ENCODE measurements at regions of chr17 and their contacts with region 1.

Region 1: GRCh38 chr17:74457146-74457819 is 9.2 kb upstream of the CD300A start:
- DNase-seq: peak; percentile 83 to 93
- ATAC-seq: peak; percentile 70
- H3K4me3 ChIP-seq: no peak overlapping the region
- H3K27ac ChIP-seq: no peak overlapping the region
- H3K4me1 ChIP-seq: no peaks in the 10 kb centered on the region
- H3K27me3 ChIP-seq: no peaks in the 10 kb centered on the region

Region 2: DNA sequence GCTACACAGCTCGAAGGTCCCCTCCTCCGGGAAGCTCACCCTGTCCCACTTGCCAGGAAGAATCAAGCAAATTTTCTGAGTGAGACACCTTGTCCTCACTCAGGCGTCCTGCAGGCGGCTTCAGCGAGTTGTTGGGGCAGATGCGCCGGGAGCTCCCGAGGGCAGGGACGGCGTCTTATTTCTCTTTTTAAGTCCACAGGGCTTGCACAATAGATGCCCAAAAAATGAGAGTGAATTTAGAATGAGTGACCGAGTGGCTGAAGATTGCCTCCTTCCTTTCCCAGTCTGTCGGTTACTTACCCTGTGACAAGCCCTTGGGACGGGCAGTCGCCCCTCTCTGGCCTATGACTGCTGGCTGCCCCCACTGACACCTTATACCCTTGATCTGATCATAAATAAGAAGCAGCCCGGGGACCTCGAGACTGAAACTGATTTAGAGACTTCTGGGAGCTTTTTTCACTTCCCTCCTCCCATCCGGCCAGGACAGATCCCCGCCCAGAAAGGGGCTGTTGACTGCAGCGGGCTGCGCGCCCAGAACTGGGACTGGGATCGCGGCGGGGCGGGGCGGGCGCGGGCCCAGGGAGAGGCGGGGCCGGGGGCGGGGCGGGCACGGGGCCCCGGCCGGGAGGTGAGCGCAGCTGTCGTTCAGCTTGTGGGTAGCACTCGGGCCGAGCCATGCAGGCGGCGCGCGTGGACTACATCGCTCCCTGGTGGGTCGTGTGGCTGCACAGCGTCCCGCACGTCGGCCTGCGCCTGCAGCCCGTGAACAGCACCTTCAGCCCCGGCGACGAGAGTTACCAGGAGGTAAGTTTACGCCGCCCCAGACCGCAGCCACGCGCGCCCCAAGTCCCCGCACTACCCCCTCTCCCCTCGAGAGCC is 244.1 kb before region 1 on chr17 and contains the start of gene TTYH2:
- intact Hi-C with region 1: loop called in 1 of 2 experiments (anchors 5 kb)
- DNase-seq: peak; percentile 94 to 95
- ATAC-seq: peak; percentile 91
- H3K4me3 ChIP-seq: peak within 1 kb of the TSS; percentile 28 to 55
- H3K27ac ChIP-seq: no peak within 1 kb of the TSS
- H3K4me1 ChIP-seq: no peaks in the 10 kb centered on the region
- H3K27me3 ChIP-seq: no peaks in the 10 kb centered on the region
- total RNA-seq, gene TTYH2: 4.4 to 13.0 TPM

Region 3: GRCh38 chr17:74307984-74308773 is 149.1 kb before region 1 on chr17:
- intact Hi-C with region 1: no loop called
- DNase-seq: no peak
- ATAC-seq: no peak
- H3K4me3 ChIP-seq: no peak overlapping the region
- H3K27ac ChIP-seq: no peak overlapping the region
- H3K4me1 ChIP-seq: no peaks in the 10 kb centered on the region
- H3K27me3 ChIP-seq: peaks cover 0 to 1% of the 10 kb centered on the region in 2 donors

Region 4: GRCh38 chr17:74379495-74380085 is 77.7 kb before region 1 on chr17:
- intact Hi-C with region 1: loop called (anchors 1 kb)
- DNase-seq: peak; percentile 95 to 99
- ATAC-seq: peak; percentile 94
- H3K4me3 ChIP-seq: no peak overlapping the region
- H3K27ac ChIP-seq: peak overlapping the region in 1 of 2 donors; percentile 12
- H3K4me1 ChIP-seq: no peaks in the 10 kb centered on the region
- H3K27me3 ChIP-seq: no peaks in the 10 kb centered on the region

Region 5: DNA sequence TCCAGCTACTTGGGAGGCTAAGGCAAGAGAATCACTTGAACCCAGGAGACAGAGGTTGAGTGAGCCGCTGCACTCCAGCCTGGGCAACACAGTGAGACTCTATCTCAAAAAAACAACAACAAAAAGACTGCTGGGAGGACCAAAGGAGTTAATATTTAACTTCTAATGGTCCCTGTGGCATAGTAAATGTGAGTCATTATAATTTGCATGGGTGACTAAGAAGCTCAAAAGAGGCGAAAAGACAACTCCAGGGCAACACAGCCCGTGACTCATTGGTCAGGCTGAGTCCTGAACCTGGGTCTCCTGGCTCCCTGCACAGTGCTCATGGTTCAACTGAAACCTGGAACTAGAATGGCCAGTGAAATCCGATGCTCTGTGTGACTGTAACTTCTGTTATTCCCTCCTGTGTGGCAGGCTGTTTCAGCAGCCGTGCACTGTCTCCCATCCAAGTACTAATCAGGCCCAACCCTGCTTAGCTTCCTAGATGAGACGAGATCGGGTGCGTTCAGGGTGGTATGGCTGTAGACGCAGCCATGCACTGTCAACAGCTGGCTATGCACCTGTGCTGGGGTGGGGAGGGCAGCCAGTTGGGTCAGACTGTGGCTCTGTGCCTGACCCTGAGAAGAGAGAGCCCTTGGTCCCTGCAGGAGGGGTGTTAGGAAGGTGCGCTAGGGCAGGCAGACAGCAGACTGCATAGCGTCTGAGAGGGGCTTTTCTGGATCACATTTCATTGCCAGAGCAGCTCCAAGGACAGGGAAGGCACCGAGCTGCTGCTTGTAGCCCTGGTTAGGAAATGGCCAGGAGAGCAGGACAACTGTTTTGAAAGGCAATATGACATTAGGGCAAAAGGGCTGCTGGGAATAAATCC is 39.9 kb before region 1 on chr17:
- intact Hi-C with region 1: loop called in 1 of 2 experiments (anchors 5 kb)
- DNase-seq: no peak
- ATAC-seq: no peak
- H3K4me3 ChIP-seq: no peak overlapping the region
- H3K27ac ChIP-seq: no peak overlapping the region
- H3K4me1 ChIP-seq: no peaks in the 10 kb centered on the region
- H3K27me3 ChIP-seq: no peaks in the 10 kb centered on the region

Region 6: GRCh38 chr17:74430706-74431567 is 26.3 kb before region 1 on chr17:
- intact Hi-C with region 1: loop called in 1 of 2 experiments (anchors 2 kb)
- DNase-seq: peak; percentile 89 to 94
- ATAC-seq: peak; percentile 86
- H3K4me3 ChIP-seq: peak overlapping the region; percentile 54 to 84
- H3K27ac ChIP-seq: peak overlapping the region; percentile 73 to 91
- H3K4me1 ChIP-seq: no peaks in the 10 kb centered on the region
- H3K27me3 ChIP-seq: no peaks in the 10 kb centered on the region